ENCODE measurements at regions of chr20 and their contacts with region 1.

Region 1: GRCh38 chr20:18793625-18794427 is 19.8 kb upstream of the SCP2D1 start:
- DNase-seq: peak; percentile 95
- ATAC-seq: peak; percentile 94
- H3K4me3 ChIP-seq: peak overlapping the region; percentile 69 to 86 (median 73)
- H3K4me3 Mint-ChIP-seq: peak overlapping the region; percentile 97
- H3K27ac ChIP-seq: peak overlapping the region; percentile 90 to 93
- H3K27ac Mint-ChIP-seq: peak overlapping the region; percentile 99
- H3K4me1 ChIP-seq: peaks cover 6 to 14% of the 10 kb centered on the region in 2 donors
- H3K4me1 Mint-ChIP-seq: peaks cover 20% of the 10 kb centered on the region
- H3K27me3 ChIP-seq: peaks cover 0 to 8% (median 2%) of the 10 kb centered on the region in 4 experiments
- H3K27me3 Mint-ChIP-seq: peaks cover 16% of the 10 kb centered on the region
- CTCF ChIP-seq: peak; percentile 24

Region 2: DNA sequence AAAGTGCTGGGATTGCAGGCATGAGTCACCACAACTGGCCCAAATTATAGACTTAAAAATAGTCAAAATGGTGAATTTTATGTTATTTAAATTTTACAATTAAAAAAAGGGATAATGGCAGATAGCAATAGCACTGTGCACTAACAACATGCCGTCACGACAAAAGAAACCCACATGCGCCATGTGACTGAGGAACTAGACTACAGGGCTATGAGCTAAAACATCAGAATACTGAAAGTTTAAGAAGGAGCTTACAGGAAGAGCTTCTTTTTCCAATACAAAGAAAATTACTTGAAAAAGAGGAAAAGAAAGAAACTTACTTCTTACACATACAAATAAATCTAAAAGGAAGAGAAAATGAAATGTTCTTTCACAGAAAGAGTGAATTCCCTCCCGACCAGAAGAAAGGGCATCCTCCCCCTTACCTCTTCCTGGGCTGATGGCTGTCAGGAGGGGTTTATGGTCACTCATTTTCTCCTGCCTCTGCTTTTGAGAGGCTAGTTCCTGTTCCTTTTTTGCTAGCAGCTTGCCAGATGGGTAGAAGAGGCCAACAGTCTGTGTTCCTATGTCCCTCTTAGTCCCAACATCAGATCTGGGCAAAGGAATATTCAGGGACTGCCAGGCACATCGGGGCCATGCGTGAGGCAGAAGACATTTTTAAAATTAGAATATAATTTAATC is 381.5 kb before region 1 on chr20:
- CTCF ChIA-PET with region 1: no interaction called
- POLR2A ChIA-PET with region 1: no interaction called
- intact Hi-C with region 1: loop called (anchors 1 kb)
- DNase-seq: peak; percentile 52
- ATAC-seq: peak; percentile 20
- H3K4me3 ChIP-seq: peak overlapping the region in 1 of 5 experiments; percentile 25
- H3K4me3 Mint-ChIP-seq: peak overlapping the region; percentile 63
- H3K27ac ChIP-seq: peak overlapping the region; percentile 65 to 70
- H3K27ac Mint-ChIP-seq: peak overlapping the region; percentile 70
- H3K4me1 ChIP-seq: peaks cover 7 to 15% of the 10 kb centered on the region in 2 donors
- H3K4me1 Mint-ChIP-seq: peaks cover 11% of the 10 kb centered on the region
- H3K27me3 ChIP-seq: no peaks in the 10 kb centered on the region
- H3K27me3 Mint-ChIP-seq: no peaks in the 10 kb centered on the region
- CTCF ChIP-seq: no peak

Region 3: GRCh38 chr20:18566892-18567742 is 226.7 kb before region 1 on chr20 and contains the start of gene SMIM26:
- CTCF ChIA-PET with region 1: no interaction called
- POLR2A ChIA-PET with region 1: no interaction called
- intact Hi-C with region 1: loop called (anchors 1 kb)
- DNase-seq: peak; percentile 95
- ATAC-seq: peak; percentile 98
- H3K4me3 ChIP-seq: peak within 1 kb of the TSS; percentile 67 to 88 (median 80)
- H3K4me3 Mint-ChIP-seq: peak within 1 kb of the TSS; percentile 99
- H3K27ac ChIP-seq: peak within 1 kb of the TSS; percentile 84 to 91
- H3K27ac Mint-ChIP-seq: peak within 1 kb of the TSS; percentile 97
- H3K4me1 ChIP-seq: peaks cover 12 to 13% of the 10 kb centered on the region in 2 donors
- H3K4me1 Mint-ChIP-seq: peaks cover 18% of the 10 kb centered on the region
- H3K27me3 ChIP-seq: no peaks in the 10 kb centered on the region
- H3K27me3 Mint-ChIP-seq: no peaks in the 10 kb centered on the region
- CTCF ChIP-seq: no peak
- total RNA-seq, gene SMIM26: 47.4 and 47.7 TPM in 2 replicates

Region 4: DNA sequence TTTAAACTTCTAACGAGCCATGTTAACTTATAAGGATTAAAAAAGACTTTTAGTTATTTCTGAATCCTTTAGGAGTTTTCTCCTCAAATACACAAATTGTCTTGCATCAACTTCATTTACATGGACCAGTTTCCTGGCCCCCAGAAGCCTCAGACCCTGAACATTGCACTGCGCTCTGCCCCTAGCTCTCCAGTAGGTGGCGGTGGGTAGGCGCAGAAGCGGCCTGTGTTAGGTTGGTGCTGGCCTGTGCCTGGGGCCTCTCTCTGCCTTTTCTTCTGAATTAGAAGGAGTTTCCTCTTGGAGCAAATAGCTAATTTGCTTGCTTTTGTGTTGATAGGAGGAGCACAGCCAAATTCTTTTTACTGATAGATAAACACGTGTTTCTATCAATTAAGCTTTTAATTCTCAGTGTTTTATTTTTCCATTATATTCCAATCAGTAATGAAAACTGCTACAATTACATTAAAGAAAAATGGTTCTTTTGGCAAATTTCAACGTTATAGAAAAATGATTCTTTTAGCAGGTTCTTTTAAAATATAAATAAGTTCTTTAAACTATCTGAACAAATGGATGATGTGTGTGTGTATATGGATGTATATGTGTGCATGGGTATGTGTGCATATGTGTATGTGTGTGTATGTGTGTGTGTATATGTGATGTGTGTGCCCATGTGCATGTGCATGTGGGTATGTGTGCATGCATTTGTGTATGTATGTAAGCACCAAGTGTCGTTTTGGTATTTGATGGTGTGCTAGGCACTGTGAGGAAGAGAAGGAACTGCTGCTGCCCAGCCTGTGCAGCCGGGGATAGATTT is 161.4 kb before region 1 on chr20:
- CTCF ChIA-PET with region 1: interaction called, 3 read pairs
- POLR2A ChIA-PET with region 1: no interaction called
- intact Hi-C with region 1: loop called (anchors 2 kb)
- DNase-seq: peak; percentile 67
- ATAC-seq: peak; percentile 93
- H3K4me3 ChIP-seq: no peak overlapping the region
- H3K4me3 Mint-ChIP-seq: no peak overlapping the region
- H3K27ac ChIP-seq: no peak overlapping the region
- H3K27ac Mint-ChIP-seq: no peak overlapping the region
- H3K4me1 ChIP-seq: no peaks in the 10 kb centered on the region
- H3K4me1 Mint-ChIP-seq: no peaks in the 10 kb centered on the region
- H3K27me3 ChIP-seq: no peaks in the 10 kb centered on the region
- H3K27me3 Mint-ChIP-seq: no peaks in the 10 kb centered on the region
- CTCF ChIP-seq: peak; percentile 95

Region 5: DNA sequence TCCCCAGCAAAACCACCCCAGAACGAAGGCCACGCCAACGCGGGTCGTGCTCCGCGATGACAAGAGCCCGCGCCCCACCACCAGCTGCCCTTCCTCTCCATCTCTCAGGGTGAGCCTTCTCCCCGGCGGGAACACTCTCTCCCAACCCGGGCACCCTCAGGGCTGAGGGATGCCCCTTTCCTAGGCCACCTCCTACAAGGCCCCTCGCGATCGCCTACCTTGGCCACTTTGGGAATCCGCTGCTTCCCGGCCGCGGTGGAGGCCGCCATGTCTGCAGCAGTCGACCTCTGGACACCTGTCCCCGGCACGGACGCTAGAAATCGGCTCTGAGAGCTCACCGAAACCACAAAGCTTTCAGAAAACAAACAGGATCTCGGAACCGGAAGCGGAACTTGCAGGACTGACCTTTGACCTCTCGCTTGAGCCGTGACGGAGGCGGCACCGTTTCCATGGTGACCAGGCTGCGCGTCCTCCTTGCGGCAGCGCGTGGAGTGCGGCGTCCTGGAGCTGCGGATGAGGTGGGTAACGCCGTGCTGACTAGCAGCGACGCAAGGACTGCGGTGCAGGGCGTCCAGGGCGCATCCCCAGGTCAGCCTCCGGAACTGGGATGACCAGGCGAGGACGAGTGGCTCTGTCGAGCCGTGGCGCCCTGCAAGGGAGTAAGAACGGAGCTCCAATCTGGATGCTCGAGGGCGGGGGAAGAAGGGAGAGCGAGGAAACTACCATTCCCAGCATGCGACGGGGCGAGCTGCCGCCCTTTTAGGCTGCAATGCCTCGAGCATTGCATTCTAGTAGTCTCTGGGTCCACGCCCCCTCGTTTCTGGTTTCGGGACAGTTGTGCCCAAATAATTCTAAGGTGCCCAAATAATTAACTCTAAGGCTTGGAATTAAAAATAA is 1258.5 kb after region 1 on chr20 and contains the starts of genes CFAP61 and CRNKL1:
- CTCF ChIA-PET with region 1: no interaction called
- POLR2A ChIA-PET with region 1: no interaction called
- intact Hi-C with region 1: loop called (anchors 5 kb)
- DNase-seq: peak; percentile 99
- ATAC-seq: peak; percentile 93
- H3K4me3 ChIP-seq: peak within 1 kb of the TSS; percentile 85 to 98 (median 97)
- H3K4me3 Mint-ChIP-seq: peak within 1 kb of the TSS; percentile 99
- H3K27ac ChIP-seq: peak within 1 kb of the TSS; percentile 78 to 91
- H3K27ac Mint-ChIP-seq: peak within 1 kb of the TSS; percentile 97
- H3K4me1 ChIP-seq: peaks cover 7 to 14% of the 10 kb centered on the region in 2 donors
- H3K4me1 Mint-ChIP-seq: peaks cover 23% of the 10 kb centered on the region
- H3K27me3 ChIP-seq: peaks cover 0 to 9% (median 5%) of the 10 kb centered on the region in 4 experiments
- H3K27me3 Mint-ChIP-seq: peaks cover 7% of the 10 kb centered on the region
- CTCF ChIP-seq: no peak
- total RNA-seq, gene CFAP61: not detected in 2 replicates
- total RNA-seq, gene CRNKL1: 25.5 and 32.1 TPM in 2 replicates